Activated CD4-positive, alpha-beta T cell treated with anti-CD3 and anti-CD28 coated beads for 36 hours (primary cell): ENCODE measurements at regions of chrX and their contacts with region 1.

Region 1: GRCh38 chrX:136767104-136767941 is 13.4 kb downstream of the ARHGEF6 start:
- DNase-seq: peak; percentile 65
- ATAC-seq: peak; percentile 39
- H3K4me3 Mint-ChIP-seq: peak overlapping the region; percentile 73
- H3K27ac Mint-ChIP-seq: peak overlapping the region; percentile 85
- H3K4me1 Mint-ChIP-seq: peaks cover 59% of the 10 kb centered on the region
- H3K27me3 Mint-ChIP-seq: no peaks in the 10 kb centered on the region

Region 2: GRCh38 chrX:136652822-136653723 is 114.2 kb before region 1 on chrX:
- CTCF ChIA-PET with region 1: no interaction called
- POLR2A ChIA-PET with region 1: no interaction called
- intact Hi-C with region 1: loop called in 1 of 2 experiments (anchors 5 kb)
- DNase-seq: peak; percentile 61
- ATAC-seq: peak; percentile 56
- H3K4me3 Mint-ChIP-seq: peak overlapping the region; percentile 96
- H3K27ac Mint-ChIP-seq: peak overlapping the region; percentile 100
- H3K4me1 Mint-ChIP-seq: peaks cover 43% of the 10 kb centered on the region
- H3K27me3 Mint-ChIP-seq: no peaks in the 10 kb centered on the region

Region 3: DNA sequence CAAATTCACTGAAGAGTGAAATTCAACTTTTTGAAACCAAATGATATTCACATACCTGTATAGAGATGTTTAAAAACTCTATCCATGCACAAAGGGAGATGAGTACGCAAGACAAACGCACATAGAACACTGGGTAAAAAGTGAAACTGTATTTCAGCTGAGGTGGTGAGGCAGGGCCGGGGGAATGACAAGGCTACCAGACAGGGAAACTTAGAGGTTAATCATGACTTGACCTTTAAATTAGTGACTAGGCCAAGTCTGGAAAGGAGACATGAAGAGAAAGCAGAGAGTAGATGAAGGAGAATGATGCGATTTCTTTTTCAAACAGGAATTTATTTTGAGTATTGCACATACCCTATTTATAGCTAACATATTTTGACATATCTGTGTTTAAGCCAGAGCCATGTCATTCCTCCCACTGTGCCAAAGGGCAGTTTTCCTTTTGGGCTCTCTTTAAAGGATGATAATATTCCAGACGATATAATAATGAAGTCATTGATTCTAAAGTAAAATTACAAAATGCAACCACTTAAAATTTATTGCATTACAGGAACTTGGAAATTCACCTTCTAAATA is 36.0 kb before region 1 on chrX:
- CTCF ChIA-PET with region 1: interaction called, 3 read pairs
- POLR2A ChIA-PET with region 1: interaction called, 4 read pairs
- intact Hi-C with region 1: loop called in 1 of 2 experiments (anchors 5 kb)
- DNase-seq: peak; percentile 49
- ATAC-seq: peak; percentile 76
- H3K4me3 Mint-ChIP-seq: peak overlapping the region; percentile 36
- H3K27ac Mint-ChIP-seq: peak overlapping the region; percentile 81
- H3K4me1 Mint-ChIP-seq: peaks cover 64% of the 10 kb centered on the region
- H3K27me3 Mint-ChIP-seq: no peaks in the 10 kb centered on the region

Region 4: DNA sequence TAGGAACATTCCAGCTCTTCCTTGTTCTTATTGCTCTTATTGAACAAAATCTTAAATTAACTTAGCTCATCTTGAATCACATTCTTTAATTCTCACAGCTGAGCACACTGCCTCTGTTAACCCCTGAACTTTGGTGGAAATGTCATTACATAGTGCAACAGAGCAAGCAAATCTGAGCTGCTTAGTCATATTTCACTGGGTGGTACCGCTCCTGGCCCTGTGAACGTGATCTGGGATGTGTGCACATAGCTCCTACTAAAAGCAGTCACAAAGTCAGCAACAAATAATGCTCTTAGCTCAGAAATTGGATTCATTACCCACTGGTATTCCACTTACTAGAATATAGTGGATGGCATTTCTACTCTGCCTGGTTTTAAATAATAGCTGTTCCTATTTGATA is 14.5 kb before region 1 on chrX:
- CTCF ChIA-PET with region 1: interaction called, 16 read pairs
- POLR2A ChIA-PET with region 1: interaction called, 11 read pairs
- intact Hi-C with region 1: no loop called
- DNase-seq: no peak
- ATAC-seq: no peak
- H3K4me3 Mint-ChIP-seq: no peak overlapping the region
- H3K27ac Mint-ChIP-seq: peak overlapping the region; percentile 47
- H3K4me1 Mint-ChIP-seq: peaks cover 82% of the 10 kb centered on the region
- H3K27me3 Mint-ChIP-seq: no peaks in the 10 kb centered on the region

Region 5: DNA sequence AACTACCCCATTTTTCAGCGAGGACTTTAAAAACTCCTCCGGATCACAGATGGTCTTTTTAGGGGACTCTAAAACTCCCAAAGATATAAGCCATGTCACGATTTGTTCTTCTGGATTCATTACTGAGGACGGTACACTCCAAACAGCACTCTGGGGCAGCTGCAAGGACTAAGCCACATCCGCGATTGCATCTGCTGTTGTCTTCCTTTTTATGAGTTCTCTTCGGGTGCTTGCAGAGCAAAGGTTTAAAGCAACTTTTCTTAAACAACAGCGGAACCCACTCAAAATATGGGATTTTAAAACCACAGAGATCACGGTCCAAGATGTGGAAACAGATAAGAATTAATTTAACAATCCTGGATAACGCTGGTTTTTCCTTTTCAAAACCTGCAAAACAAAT is 13.4 kb after region 1 on chrX and contains the start of gene ARHGEF6:
- CTCF ChIA-PET with region 1: no interaction called
- POLR2A ChIA-PET with region 1: interaction called, 5 read pairs
- intact Hi-C with region 1: loop called (anchors 1 to 2 kb)
- DNase-seq: peak; percentile 55
- ATAC-seq: peak; percentile 57
- H3K4me3 Mint-ChIP-seq: peak within 1 kb of the TSS; percentile 89
- H3K27ac Mint-ChIP-seq: peak within 1 kb of the TSS; percentile 99
- H3K4me1 Mint-ChIP-seq: peaks cover 60% of the 10 kb centered on the region
- H3K27me3 Mint-ChIP-seq: no peaks in the 10 kb centered on the region
- total RNA-seq, gene ARHGEF6: 44.5 to 53.6 TPM

Region 6: GRCh38 chrX:136866337-136867095 is 99.2 kb after region 1 on chrX:
- CTCF ChIA-PET with region 1: no interaction called
- POLR2A ChIA-PET with region 1: no interaction called
- intact Hi-C with region 1: loop called in 1 of 2 experiments (anchors 5 kb)
- DNase-seq: no peak
- ATAC-seq: no peak
- H3K4me3 Mint-ChIP-seq: peak overlapping the region; percentile 31
- H3K27ac Mint-ChIP-seq: peak overlapping the region; percentile 23
- H3K4me1 Mint-ChIP-seq: peaks cover 46% of the 10 kb centered on the region
- H3K27me3 Mint-ChIP-seq: no peaks in the 10 kb centered on the region

Region 7: DNA sequence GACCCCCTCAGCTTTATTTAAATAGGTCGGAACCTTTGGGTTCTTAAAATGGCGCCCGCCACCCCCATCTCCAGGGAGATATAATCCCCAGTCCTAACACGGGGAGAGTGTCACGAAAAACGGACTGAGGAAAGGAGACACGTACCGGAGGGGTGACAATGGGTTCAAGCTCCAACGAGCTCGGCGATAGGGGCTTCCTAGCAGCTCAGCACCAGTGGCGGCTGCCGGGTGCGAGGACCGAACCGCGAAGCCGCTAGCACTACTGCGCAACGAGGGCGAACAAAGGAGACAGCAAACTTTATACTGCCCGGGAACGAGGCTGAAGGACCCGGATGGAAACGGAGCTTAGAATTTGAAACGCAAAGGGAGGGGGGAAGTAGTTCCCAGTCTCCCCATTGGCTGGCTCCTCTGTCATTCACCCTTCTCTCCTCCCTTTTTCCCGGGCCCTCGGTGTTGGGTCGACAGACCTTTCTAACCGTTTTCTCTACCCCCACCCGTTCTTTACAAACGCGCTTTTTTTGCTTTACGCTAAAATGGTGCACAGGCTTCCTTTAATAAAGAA is 113.2 kb after region 1 on chrX and contains the start of gene RBMX:
- CTCF ChIA-PET with region 1: no interaction called
- POLR2A ChIA-PET with region 1: interaction called, 4 read pairs
- intact Hi-C with region 1: loop called in 1 of 2 experiments (anchors 5 kb)
- DNase-seq: peak; percentile 92
- ATAC-seq: peak; percentile 93
- H3K4me3 Mint-ChIP-seq: peak within 1 kb of the TSS; percentile 100
- H3K27ac Mint-ChIP-seq: peak within 1 kb of the TSS; percentile 100
- H3K4me1 Mint-ChIP-seq: peaks cover 19% of the 10 kb centered on the region
- H3K27me3 Mint-ChIP-seq: no peaks in the 10 kb centered on the region
- total RNA-seq, gene RBMX: 320 to 414 TPM

Region 8: DNA sequence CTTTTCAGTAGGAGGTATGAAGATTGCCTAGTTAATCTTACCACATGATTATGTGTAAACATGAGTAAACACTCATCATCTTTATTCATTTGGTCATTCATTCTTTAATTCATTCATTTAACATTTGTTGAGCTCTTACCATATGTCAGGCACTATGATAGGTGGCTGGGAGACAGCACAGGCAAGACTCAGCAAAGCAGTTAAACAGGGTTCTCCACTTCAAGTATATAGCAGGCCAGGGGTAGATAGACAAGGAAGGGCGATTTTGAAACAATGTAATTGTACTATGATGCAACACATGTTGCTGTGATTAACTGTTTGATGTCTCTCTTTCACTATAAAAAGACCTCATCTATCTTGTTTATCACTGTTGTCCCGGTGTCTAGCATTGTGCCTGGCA is 350.8 kb after region 1 on chrX:
- CTCF ChIA-PET with region 1: no interaction called
- POLR2A ChIA-PET with region 1: no interaction called
- intact Hi-C with region 1: no loop called
- DNase-seq: no peak
- ATAC-seq: no peak
- H3K4me3 Mint-ChIP-seq: no peak overlapping the region
- H3K27ac Mint-ChIP-seq: no peak overlapping the region
- H3K4me1 Mint-ChIP-seq: no peaks in the 10 kb centered on the region
- H3K27me3 Mint-ChIP-seq: peaks cover 11% of the 10 kb centered on the region